ENCODE measurements at regions of chr5 and their contacts with region 1.

Region 1: DNA sequence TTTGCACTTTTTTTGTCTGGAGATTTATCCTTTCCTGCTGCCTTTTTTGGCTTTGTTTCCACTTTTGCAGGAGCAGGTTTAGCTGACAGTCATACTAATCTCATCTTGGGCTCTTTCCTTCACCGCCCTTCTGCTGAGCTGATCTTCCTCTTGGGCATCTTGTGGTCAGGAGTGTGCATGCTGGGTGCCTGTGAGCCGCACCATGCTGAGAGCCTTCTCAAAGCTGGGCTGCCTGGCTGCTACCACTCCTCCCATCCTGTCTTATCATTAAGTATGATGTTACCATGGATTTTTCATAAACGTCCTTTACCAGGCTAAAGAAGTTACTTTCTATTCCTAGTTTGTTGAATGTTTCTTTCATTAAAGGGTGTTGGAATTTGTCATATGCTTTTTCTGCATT is 49.5 kb upstream of the MCCC2 start:
- DNase-seq: no peak
- ATAC-seq: no peak
- H3K4me3 ChIP-seq: no peak overlapping the region
- H3K27ac ChIP-seq: no peak overlapping the region
- H3K4me1 ChIP-seq: peaks cover 10% of the 10 kb centered on the region
- H3K27me3 ChIP-seq: no peaks in the 10 kb centered on the region
- CTCF ChIP-seq: no peak

Region 2: GRCh38 chr5:71471193-71471592 is 66.5 kb before region 1 on chr5:
- intact Hi-C with region 1: no loop called
- DNase-seq: peak in 1 of 2 donors; percentile 25
- ATAC-seq: peak in 1 of 4 donors; percentile 40
- H3K4me3 ChIP-seq: no peak overlapping the region
- H3K27ac ChIP-seq: no peak overlapping the region
- H3K4me1 ChIP-seq: no peaks in the 10 kb centered on the region
- H3K27me3 ChIP-seq: no peaks in the 10 kb centered on the region
- CTCF ChIP-seq: no peak

Region 3: DNA sequence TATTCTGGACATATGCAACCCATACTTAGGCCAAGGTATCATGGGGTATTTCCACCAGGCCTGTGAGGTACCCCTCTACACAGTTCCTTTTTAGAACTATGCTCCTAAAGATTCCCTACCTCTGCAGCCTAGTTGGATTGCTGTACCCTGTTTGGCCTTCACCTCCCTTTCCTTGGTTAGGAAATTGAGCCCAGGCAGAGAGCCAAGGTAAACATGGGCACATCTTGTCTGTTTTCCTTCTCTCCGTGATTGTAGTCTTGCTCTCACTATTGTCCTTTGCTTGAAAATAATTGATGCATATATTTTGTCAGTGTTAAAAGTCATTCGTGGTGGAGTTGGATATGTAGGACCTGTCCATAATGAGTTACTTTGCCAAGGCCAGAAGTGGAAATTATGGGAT is 55.6 kb before region 1 on chr5:
- intact Hi-C with region 1: loop called in 1 of 2 experiments (anchors 10 kb)
- DNase-seq: no peak
- ATAC-seq: no peak
- H3K4me3 ChIP-seq: no peak overlapping the region
- H3K27ac ChIP-seq: no peak overlapping the region
- H3K4me1 ChIP-seq: no peaks in the 10 kb centered on the region
- H3K27me3 ChIP-seq: no peaks in the 10 kb centered on the region
- CTCF ChIP-seq: no peak

Region 4: DNA sequence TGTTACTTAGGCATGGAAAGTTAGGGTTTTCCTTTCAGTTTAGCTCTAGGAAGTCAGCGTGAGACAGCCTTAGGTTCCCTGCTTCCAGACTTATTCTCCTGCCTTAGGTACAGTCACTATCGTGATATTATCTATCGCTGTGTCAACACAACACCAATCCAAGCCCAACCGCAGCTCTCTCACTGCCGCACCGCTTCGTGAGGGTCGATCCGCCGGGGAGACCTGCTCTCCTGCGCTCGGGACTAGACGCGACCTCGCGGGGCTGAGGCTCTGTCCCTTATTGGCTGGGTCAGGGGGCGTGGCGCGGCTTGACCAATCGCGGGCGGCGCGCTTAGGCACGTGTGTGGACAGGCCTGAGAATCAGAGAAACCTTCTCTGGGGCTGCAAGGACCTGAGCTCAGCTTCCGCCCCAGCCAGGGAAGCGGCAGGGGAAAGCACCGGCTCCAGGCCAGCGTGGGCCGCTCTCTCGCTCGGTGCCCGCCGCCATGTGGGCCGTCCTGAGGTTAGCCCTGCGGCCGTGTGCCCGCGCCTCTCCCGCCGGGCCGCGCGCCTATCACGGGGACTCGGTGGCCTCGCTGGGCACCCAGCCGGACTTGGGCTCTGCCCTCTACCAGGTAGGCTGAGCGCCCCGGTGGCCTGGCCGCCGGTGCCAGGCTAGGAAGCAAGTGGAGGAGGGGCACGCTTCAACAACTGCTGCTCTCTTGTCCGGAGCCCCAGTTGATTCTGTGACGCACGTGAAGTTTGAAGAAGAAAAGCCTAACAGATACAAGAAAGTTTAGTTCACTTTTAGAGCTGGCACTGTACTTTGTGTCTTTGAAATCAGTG is 49.5 kb after region 1 on chr5 and contains the start of gene MCCC2:
- intact Hi-C with region 1: no loop called
- DNase-seq: peak; percentile 98
- ATAC-seq: peak; percentile 100
- H3K4me3 ChIP-seq: peak within 1 kb of the TSS; percentile 87
- H3K27ac ChIP-seq: peak within 1 kb of the TSS; percentile 85
- H3K4me1 ChIP-seq: peaks cover 14% of the 10 kb centered on the region
- H3K27me3 ChIP-seq: no peaks in the 10 kb centered on the region
- CTCF ChIP-seq: no peak
- total RNA-seq, gene MCCC2: 34.5 to 44.0 (median 40.8) TPM

Measured in psoas muscle (tissue), 8 donors.